ENCODE measurements at regions of chr17 and their contacts with region 1.

Region 1: GRCh38 chr17:67366193-67367157 is at the start of gene PSMD12:
- DNase-seq: peak; percentile 95
- H3K4me3 Mint-ChIP-seq: peak within 1 kb of the TSS; percentile 90
- H3K27ac Mint-ChIP-seq: peak within 1 kb of the TSS; percentile 93
- H3K4me1 Mint-ChIP-seq: peaks cover 42% of the 10 kb centered on the region
- H3K27me3 Mint-ChIP-seq: no peaks in the 10 kb centered on the region
- total RNA-seq, gene PSMD12: 67.8 to 70.7 TPM

Region 2: GRCh38 chr17:67245073-67245755 is 121.3 kb before region 1 on chr17 and contains the start of gene HELZ:
- CTCF ChIA-PET with region 1: no interaction called
- intact Hi-C with region 1: loop called (anchors 5 kb)
- DNase-seq: peak; percentile 73
- H3K4me3 Mint-ChIP-seq: peak within 1 kb of the TSS; percentile 84
- H3K27ac Mint-ChIP-seq: peak within 1 kb of the TSS; percentile 76
- H3K4me1 Mint-ChIP-seq: peaks cover 36% of the 10 kb centered on the region
- H3K27me3 Mint-ChIP-seq: peaks cover 5% of the 10 kb centered on the region
- total RNA-seq, gene HELZ: 34.7 to 39.5 TPM

Region 3: DNA sequence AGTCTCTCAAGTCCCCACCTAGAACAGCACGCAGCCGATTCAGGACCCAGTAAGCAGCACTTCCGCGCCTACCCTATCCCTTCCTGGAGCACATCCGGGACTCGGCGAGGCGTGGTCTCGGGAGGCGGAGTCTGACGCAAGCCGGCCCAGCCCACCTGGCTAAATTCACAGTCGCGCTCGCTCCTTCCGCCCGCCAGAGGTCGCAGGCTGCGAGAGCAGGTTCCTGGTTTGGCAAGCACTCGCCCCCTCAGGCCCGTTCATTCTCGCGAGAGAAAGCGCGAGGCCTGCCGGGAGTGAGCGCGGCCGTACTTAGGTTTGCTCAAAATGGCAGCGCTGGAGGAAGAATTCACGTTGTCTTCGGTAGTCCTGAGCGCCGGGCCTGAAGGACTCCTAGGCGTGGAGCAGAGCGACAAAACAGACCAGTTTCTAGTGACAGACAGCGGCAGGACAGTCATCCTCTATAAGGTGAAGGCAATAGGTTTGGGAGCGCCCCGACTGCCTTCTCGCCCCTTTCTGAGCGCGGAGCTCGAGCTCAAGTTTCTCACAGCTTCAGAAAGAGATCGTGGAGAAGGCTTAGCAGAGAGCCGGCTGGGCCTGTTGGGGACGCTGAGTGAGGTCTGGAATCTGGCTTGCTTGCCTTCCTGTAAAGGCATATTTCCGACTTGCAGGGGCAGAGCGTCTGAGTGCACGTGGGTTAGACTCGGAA is 351.3 kb after region 1 on chr17 and contains the start of gene NOL11:
- CTCF ChIA-PET with region 1: no interaction called
- intact Hi-C with region 1: loop called (anchors 1 kb)
- DNase-seq: peak; percentile 100
- H3K4me3 Mint-ChIP-seq: peak within 1 kb of the TSS; percentile 100
- H3K27ac Mint-ChIP-seq: peak within 1 kb of the TSS; percentile 99
- H3K4me1 Mint-ChIP-seq: peaks cover 20% of the 10 kb centered on the region
- H3K27me3 Mint-ChIP-seq: peaks cover 3% of the 10 kb centered on the region
- total RNA-seq, gene NOL11: 49.7 to 54.1 TPM